ENCODE measurements at regions of chr1 and their contacts with region 1.

Region 1: DNA sequence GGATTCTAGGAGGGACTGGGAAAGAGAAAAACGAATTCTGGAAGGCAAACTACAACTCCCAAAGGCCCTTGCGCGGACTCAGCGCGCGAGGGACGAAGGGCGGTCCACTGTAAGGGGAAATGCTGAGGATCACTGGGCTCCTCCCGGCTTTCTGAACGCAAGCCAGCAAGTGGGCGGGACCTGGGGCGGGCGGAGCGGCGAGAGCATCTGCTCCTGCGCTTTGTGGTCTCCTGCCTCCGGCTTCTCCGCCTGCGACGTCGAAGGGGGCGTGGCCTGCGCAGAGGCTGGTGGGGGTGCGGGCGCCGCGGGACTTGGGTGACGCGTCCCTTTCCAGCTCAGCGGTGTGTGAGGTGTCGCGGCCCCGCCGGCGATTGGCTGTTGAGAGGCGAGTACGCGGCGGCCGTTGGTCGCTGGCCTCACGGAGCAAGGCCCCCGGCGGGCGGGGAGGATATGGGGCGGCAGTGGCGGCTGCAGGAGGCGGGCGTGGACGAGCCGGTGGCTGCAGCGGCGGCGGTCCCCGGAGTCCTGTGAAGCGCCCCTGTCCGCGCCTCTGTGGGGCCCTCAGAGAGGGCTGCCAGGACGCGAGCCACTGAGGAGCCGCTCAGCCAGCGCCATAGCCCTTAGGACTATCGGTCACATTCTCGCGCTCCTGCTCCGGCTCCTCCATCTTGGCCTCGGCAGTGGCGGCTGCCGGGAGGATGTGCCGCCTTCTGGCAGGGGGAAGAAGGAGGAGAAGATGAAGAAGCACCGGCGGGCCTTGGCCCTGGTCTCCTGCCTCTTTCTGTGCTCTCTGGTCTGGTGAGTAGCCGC is at the start of gene SUCO:
- DNase-seq: peak; percentile 99 to 100 (median 100)
- ATAC-seq: peak; percentile 82
- H3K4me3 ChIP-seq: peak within 1 kb of the TSS; percentile 89
- H3K4me3 Mint-ChIP-seq: peak within 1 kb of the TSS; percentile 99
- H3K27ac ChIP-seq: peak within 1 kb of the TSS; percentile 97 to 99
- H3K27ac Mint-ChIP-seq: peak within 1 kb of the TSS; percentile 99
- H3K4me1 ChIP-seq: peaks cover 7% of the 10 kb centered on the region
- H3K4me1 Mint-ChIP-seq: peaks cover 51% of the 10 kb centered on the region
- H3K27me3 ChIP-seq: peaks cover 0 to 7% of the 10 kb centered on the region in 2 experiments
- H3K27me3 Mint-ChIP-seq: peaks cover 7% of the 10 kb centered on the region
- CTCF ChIP-seq: peak; percentile 37
- total RNA-seq, gene SUCO: 93.1 to 104 TPM

Region 2: GRCh38 chr1:171781176-171781875 is 751.6 kb before region 1 on chr1 and contains the start of gene METTL13:
- CTCF ChIA-PET with region 1: no interaction called
- POLR2A ChIA-PET with region 1: interaction called, 12 read pairs
- intact Hi-C with region 1: loop called (anchors 1 to 5 kb)
- DNase-seq: peak; percentile 95 to 100 (median 98)
- ATAC-seq: peak; percentile 91
- H3K4me3 ChIP-seq: peak within 1 kb of the TSS; percentile 78
- H3K4me3 Mint-ChIP-seq: peak within 1 kb of the TSS; percentile 99
- H3K27ac ChIP-seq: peak within 1 kb of the TSS; percentile 63 to 75
- H3K27ac Mint-ChIP-seq: peak within 1 kb of the TSS; percentile 90
- H3K4me1 ChIP-seq: peaks cover 46% of the 10 kb centered on the region
- H3K4me1 Mint-ChIP-seq: peaks cover 47% of the 10 kb centered on the region
- H3K27me3 ChIP-seq: no peaks in the 10 kb centered on the region
- H3K27me3 Mint-ChIP-seq: no peaks in the 10 kb centered on the region
- CTCF ChIP-seq: no peak
- total RNA-seq, gene METTL13: 6.5 to 7.9 TPM

Region 3: GRCh38 chr1:172220376-172220775 is 312.5 kb before region 1 on chr1:
- CTCF ChIA-PET with region 1: no interaction called
- POLR2A ChIA-PET with region 1: no interaction called
- intact Hi-C with region 1: no loop called
- DNase-seq: no peak
- ATAC-seq: no peak
- H3K4me3 ChIP-seq: no peak overlapping the region
- H3K4me3 Mint-ChIP-seq: no peak overlapping the region
- H3K27ac ChIP-seq: no peak overlapping the region
- H3K27ac Mint-ChIP-seq: no peak overlapping the region
- H3K4me1 ChIP-seq: no peaks in the 10 kb centered on the region
- H3K4me1 Mint-ChIP-seq: no peaks in the 10 kb centered on the region
- H3K27me3 ChIP-seq: no peaks in the 10 kb centered on the region
- H3K27me3 Mint-ChIP-seq: no peaks in the 10 kb centered on the region
- CTCF ChIP-seq: no peak

Region 4: DNA sequence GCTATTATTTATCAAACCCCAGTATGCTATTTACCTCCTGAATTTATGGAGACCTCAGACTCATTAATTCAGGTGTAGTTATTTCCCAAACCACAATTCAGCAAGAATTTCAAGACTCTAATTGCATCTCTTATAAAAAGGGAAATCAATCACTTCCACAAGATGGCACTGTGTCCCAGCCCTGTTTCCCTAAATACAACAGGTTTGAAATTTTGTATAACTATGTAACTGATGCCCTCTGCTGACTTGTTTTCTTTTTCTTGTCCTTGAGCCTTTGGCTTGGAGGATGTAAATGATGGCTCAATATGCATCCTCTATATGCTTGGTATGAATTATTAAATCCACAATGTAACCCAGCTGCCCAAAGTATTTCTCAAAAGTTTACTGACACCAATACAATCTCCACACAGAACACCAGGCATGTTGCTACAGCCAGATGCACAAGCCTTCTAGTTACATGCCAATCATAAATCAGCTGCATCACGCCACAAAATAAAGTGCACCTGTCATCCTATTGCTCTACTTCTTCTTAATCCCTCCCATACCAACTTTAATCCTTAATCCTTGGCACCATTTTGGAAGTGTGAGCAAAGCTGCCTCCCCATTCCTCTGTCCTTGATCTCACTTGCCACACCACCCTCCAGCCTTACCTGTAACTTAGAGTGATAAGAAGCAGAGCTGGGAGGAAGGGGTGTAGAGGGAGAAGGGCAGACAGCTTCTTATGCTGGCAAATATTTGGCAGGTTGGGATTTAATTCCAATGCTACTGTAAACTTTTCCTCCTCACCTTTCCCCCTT is 103.4 kb before region 1 on chr1:
- CTCF ChIA-PET with region 1: no interaction called
- POLR2A ChIA-PET with region 1: interaction called, 14 read pairs
- intact Hi-C with region 1: no loop called
- DNase-seq: peak in 12 of 14 experiments; percentile 8 to 81 (median 34)
- ATAC-seq: peak; percentile 75
- H3K4me3 ChIP-seq: no peak overlapping the region
- H3K4me3 Mint-ChIP-seq: peak overlapping the region; percentile 64
- H3K27ac ChIP-seq: no peak overlapping the region
- H3K27ac Mint-ChIP-seq: peak overlapping the region; percentile 75
- H3K4me1 ChIP-seq: peaks cover 39% of the 10 kb centered on the region
- H3K4me1 Mint-ChIP-seq: peaks cover 39% of the 10 kb centered on the region
- H3K27me3 ChIP-seq: no peaks in the 10 kb centered on the region
- H3K27me3 Mint-ChIP-seq: no peaks in the 10 kb centered on the region
- CTCF ChIP-seq: peak; percentile 80

Region 5: DNA sequence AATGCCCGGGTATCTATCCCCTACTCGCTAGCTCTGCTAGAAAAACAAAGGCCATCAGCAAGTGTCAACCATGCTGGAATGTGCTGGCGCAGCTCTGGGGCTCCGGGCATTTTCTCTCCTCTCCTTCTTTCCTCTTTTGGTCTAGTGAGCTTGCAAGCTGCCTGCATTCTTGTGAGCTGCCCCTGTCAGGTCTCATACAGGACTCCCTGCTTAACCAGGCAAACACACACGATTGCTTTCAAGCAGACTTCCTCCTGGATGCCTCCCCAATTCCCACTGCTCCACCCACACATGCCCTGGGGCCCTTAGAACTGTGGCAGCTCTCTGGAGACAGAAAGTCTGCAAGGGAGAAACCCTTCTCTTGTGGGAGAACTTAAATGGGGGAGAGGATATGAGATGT is 35.7 kb before region 1 on chr1:
- CTCF ChIA-PET with region 1: no interaction called
- POLR2A ChIA-PET with region 1: no interaction called
- intact Hi-C with region 1: no loop called
- DNase-seq: no peak
- ATAC-seq: no peak
- H3K4me3 ChIP-seq: no peak overlapping the region
- H3K4me3 Mint-ChIP-seq: no peak overlapping the region
- H3K27ac ChIP-seq: no peak overlapping the region
- H3K27ac Mint-ChIP-seq: no peak overlapping the region
- H3K4me1 ChIP-seq: no peaks in the 10 kb centered on the region
- H3K4me1 Mint-ChIP-seq: no peaks in the 10 kb centered on the region
- H3K27me3 ChIP-seq: no peaks in the 10 kb centered on the region
- H3K27me3 Mint-ChIP-seq: no peaks in the 10 kb centered on the region
- CTCF ChIP-seq: no peak

Region 6: DNA sequence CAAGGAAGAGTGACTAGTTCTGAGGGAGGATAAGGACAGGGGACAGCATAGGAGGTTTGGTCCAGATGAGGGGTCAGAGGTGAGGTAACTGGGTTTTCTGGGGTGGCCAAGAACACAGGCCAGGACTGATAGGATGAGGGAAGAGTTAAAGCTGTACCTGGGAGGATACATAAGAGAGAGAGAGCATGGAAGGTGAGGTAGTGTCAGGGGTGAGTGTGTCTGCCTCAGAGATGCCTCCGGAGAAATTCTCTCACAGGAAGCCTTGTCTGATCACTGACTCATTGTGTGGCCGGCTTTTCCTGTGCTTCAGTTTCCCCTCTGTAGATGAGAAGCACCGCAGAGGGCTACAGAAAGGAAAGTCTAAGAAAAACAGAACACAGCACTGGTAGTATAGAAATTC is 166.2 kb after region 1 on chr1:
- CTCF ChIA-PET with region 1: no interaction called
- POLR2A ChIA-PET with region 1: interaction called, 5 read pairs
- intact Hi-C with region 1: loop called in 1 of 2 experiments (anchors 10 kb)
- DNase-seq: peak; percentile 45 to 90 (median 67)
- ATAC-seq: peak; percentile 84
- H3K4me3 ChIP-seq: no peak overlapping the region
- H3K4me3 Mint-ChIP-seq: peak overlapping the region; percentile 46
- H3K27ac ChIP-seq: peak overlapping the region; percentile 73 to 83
- H3K27ac Mint-ChIP-seq: no peak overlapping the region
- H3K4me1 ChIP-seq: peaks cover 70% of the 10 kb centered on the region
- H3K4me1 Mint-ChIP-seq: peaks cover 6% of the 10 kb centered on the region
- H3K27me3 ChIP-seq: no peaks in the 10 kb centered on the region
- H3K27me3 Mint-ChIP-seq: no peaks in the 10 kb centered on the region
- CTCF ChIP-seq: no peak

Region 7: DNA sequence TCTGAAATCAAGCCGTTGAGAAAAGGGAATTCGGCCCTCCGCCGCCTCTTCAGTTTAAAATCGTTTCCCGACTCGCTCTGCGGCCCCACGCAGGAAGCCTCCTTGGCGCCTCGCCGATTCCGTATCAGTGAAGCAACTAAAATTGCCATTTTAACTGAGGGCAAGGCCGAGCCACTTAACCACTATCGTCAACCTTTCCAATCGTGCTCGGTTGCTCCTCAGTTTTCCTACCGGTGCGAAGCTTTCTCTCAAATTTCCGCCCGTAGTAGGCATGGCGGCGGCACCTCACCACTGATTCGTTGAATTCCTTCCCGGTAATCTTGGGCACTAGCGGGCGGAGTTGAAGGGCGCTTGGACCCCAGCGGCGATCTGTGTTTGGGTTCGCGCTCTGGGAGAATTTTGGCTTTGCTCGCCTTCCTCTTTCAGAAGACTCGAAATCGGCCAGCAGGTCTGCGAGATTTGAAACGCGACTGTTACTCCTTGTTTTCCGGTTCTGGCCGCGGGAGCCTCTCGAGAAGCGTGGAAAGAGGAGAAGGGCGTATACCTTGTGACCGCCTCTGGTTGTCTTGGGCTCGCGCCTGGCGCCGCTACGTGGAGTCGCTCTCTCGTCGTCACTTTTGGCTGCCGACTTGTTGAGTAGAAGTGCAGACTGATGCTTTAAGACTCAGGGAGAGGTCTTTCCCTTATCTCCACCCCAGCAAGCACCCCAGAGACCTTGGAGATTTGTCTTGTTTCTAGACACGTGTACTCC is 1291.6 kb after region 1 on chr1 and contains the starts of genes CENPL and DARS2:
- CTCF ChIA-PET with region 1: no interaction called
- POLR2A ChIA-PET with region 1: interaction called, 8 read pairs
- intact Hi-C with region 1: loop called (anchors 1 to 5 kb)
- DNase-seq: peak; percentile 80 to 97 (median 86)
- ATAC-seq: peak; percentile 87
- H3K4me3 ChIP-seq: peak within 1 kb of the TSS; percentile 94
- H3K4me3 Mint-ChIP-seq: peak within 1 kb of the TSS; percentile 96
- H3K27ac ChIP-seq: peak within 1 kb of the TSS; percentile 77 to 92
- H3K27ac Mint-ChIP-seq: peak within 1 kb of the TSS; percentile 89
- H3K4me1 ChIP-seq: peaks cover 26% of the 10 kb centered on the region
- H3K4me1 Mint-ChIP-seq: peaks cover 45% of the 10 kb centered on the region
- H3K27me3 ChIP-seq: no peaks in the 10 kb centered on the region
- H3K27me3 Mint-ChIP-seq: no peaks in the 10 kb centered on the region
- CTCF ChIP-seq: no peak
- total RNA-seq, gene CENPL: 3.8 to 4.7 TPM
- total RNA-seq, gene DARS2: 1.7 TPM

Region 8: DNA sequence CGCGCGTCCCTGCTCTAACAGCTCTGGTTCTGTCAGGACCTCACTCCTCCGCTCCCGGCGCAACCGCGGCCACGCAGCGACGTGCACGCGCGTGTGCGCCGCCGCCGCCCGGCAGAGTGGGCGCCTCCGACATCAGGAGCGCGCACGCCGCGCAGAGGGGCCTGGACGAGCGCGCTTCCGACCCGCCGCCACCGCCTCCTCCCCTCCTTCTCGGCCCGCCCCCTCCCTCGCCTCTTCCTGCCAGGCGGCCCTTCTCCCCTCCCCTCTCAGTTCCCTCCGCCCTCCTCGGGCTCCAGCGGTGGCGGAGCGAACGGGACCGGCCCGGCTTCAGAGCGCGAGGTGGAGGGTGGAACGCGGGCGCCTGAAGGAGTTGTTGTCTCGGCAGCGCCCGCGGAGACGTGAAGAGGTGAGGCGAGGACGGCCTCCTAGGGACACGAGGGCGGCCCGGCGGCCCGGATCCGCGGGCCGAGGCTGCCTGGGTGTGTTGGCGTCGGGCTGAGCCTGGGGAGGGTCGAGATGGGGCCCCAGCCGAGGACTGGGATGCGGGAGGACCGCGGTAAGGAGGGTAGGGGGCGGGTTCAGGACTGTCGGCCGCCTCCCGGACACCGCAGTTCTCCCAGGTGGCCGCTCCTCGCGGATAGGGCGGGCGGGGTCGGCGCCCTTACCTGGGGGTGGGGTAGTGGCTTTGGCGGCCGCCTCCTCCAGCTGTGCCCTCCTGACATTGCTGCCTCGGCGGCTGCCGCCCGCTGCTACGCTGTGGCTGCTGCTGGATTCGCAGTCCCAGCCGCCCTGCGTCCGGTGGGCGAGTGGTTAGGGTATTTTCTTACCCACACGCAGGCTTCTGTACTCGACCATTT is 1626.6 kb after region 1 on chr1 and contains the start of gene RABGAP1L:
- CTCF ChIA-PET with region 1: no interaction called
- POLR2A ChIA-PET with region 1: interaction called, 3 read pairs
- intact Hi-C with region 1: loop called in 1 of 2 experiments (anchors 10 kb)
- DNase-seq: peak; percentile 88 to 99 (median 94)
- ATAC-seq: peak; percentile 90
- H3K4me3 ChIP-seq: peak within 1 kb of the TSS; percentile 73
- H3K4me3 Mint-ChIP-seq: peak within 1 kb of the TSS; percentile 96
- H3K27ac ChIP-seq: peak within 1 kb of the TSS; percentile 85 to 95
- H3K27ac Mint-ChIP-seq: peak within 1 kb of the TSS; percentile 92
- H3K4me1 ChIP-seq: peaks cover 20% of the 10 kb centered on the region
- H3K4me1 Mint-ChIP-seq: peaks cover 58% of the 10 kb centered on the region
- H3K27me3 ChIP-seq: no peaks in the 10 kb centered on the region
- H3K27me3 Mint-ChIP-seq: no peaks in the 10 kb centered on the region
- CTCF ChIP-seq: no peak
- total RNA-seq, gene RABGAP1L: 59.8 to 67.6 TPM